PC-3 (cell line): ENCODE measurements at regions of chr18 and their contacts with region 1.

Region 1: GRCh38 chr18:33495278-33495677 is 54.8 kb upstream of the CCDC178 start:
- DNase-seq: peak; percentile 31
- ATAC-seq: peak; percentile 77
- H3K4me3 ChIP-seq: no peak overlapping the region
- H3K27ac ChIP-seq: no peak overlapping the region
- H3K4me1 ChIP-seq: no peaks in the 10 kb centered on the region
- H3K27me3 ChIP-seq: no peaks in the 10 kb centered on the region; the same call in 1 of the 2 replicates
- CTCF ChIP-seq: peak; percentile 53

Region 2: DNA sequence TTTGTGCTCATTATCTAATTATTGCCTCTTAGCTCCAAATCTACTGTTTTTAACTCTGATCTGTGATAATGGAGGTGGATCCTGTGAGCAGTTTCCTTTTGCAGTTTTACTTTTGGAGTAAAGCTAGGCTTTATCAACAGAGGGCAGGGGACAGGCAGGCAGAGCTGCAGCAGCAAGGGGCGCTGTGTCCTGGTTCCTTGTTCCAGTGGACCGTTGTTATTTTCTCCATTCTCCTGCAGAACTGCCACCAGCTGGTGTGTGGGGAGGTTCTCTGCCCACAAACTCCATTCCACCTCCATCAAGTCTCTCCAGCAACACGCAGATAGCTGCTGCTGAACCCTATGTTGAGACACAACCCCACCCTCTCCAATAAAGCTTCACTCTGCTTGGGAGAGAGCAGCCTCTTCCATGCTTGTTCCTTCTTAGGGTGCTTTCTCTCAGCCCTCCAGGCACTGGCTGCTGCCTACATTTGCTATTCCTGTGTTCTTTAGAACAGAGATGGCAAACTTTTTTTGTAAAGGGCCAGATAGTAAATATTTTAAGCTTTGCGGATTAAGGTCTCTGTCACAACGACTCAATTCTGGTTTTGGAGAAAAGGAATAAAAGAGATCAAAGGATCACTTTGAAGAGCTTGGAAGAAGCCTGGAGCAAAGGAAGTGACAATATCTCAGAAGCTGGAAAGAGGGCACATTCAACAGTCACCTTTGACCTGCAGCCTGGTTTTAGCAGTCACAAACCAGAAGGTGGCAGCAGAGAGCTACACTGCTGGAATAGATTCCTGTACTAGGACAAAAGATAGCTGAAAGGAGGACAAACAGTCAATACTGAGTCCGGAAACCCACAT is 263.6 kb before region 1 on chr18:
- CTCF ChIA-PET with region 1: interaction called, 3 read pairs
- POLR2A ChIA-PET with region 1: no interaction called
- intact Hi-C with region 1: loop called (anchors 1 kb)
- DNase-seq: peak; percentile 55
- ATAC-seq: peak; percentile 62
- H3K4me3 ChIP-seq: no peak overlapping the region
- H3K27ac ChIP-seq: no peak overlapping the region
- H3K4me1 ChIP-seq: no peaks in the 10 kb centered on the region
- H3K27me3 ChIP-seq: no peaks in the 10 kb centered on the region
- CTCF ChIP-seq: peak; percentile 68

Region 3: GRCh38 chr18:33316146-33316587 is 179.1 kb before region 1 on chr18:
- CTCF ChIA-PET with region 1: no interaction called
- POLR2A ChIA-PET with region 1: no interaction called
- intact Hi-C with region 1: no loop called
- DNase-seq: no peak
- ATAC-seq: no peak
- H3K4me3 ChIP-seq: no peak overlapping the region
- H3K27ac ChIP-seq: no peak overlapping the region
- H3K4me1 ChIP-seq: no peaks in the 10 kb centered on the region
- H3K27me3 ChIP-seq: no peaks in the 10 kb centered on the region
- CTCF ChIP-seq: no peak

Region 4: GRCh38 chr18:33330711-33331110 is 164.6 kb before region 1 on chr18:
- CTCF ChIA-PET with region 1: no interaction called
- POLR2A ChIA-PET with region 1: no interaction called
- intact Hi-C with region 1: loop called (anchors 2 kb)
- DNase-seq: no peak
- ATAC-seq: no peak
- H3K4me3 ChIP-seq: no peak overlapping the region
- H3K27ac ChIP-seq: no peak overlapping the region
- H3K4me1 ChIP-seq: no peaks in the 10 kb centered on the region
- H3K27me3 ChIP-seq: no peaks in the 10 kb centered on the region
- CTCF ChIP-seq: no peak

Region 5: DNA sequence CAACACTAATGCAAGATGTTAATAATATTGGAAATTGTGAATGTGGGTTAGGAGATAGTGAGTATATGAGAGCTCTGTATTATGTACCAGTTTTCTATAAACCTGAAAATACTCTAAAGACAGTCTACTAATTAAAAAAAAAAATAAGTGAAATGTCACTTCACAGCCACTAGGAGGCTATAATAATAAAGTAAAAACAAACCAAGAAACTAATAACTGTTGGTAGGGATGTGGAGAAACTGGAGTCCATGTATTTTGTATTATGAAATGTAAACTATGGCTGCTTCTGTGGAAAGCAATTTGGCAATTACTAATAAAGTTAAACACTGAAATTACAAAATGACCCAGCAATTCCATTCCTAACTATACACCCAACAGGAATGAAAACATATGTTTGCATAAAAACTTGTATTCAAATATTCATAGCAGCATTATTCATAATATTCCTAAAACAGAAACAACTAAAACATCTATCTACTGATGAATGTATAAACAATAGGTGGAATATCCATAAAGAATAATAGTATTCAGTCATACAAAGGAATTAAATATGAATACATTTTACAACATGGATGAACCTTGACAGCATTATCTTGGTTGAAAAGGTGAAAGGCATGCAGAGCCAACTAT is 90.9 kb before region 1 on chr18:
- CTCF ChIA-PET with region 1: no interaction called
- POLR2A ChIA-PET with region 1: no interaction called
- intact Hi-C with region 1: loop called (anchors 1 kb)
- DNase-seq: no peak
- ATAC-seq: no peak
- H3K4me3 ChIP-seq: no peak overlapping the region
- H3K27ac ChIP-seq: no peak overlapping the region
- H3K4me1 ChIP-seq: no peaks in the 10 kb centered on the region
- H3K27me3 ChIP-seq: no peaks in the 10 kb centered on the region
- CTCF ChIP-seq: peak; percentile 44; the same call in 1 of the 2 replicates